ENCODE measurements at regions of chr1 and their contacts with region 1.

Region 1: DNA sequence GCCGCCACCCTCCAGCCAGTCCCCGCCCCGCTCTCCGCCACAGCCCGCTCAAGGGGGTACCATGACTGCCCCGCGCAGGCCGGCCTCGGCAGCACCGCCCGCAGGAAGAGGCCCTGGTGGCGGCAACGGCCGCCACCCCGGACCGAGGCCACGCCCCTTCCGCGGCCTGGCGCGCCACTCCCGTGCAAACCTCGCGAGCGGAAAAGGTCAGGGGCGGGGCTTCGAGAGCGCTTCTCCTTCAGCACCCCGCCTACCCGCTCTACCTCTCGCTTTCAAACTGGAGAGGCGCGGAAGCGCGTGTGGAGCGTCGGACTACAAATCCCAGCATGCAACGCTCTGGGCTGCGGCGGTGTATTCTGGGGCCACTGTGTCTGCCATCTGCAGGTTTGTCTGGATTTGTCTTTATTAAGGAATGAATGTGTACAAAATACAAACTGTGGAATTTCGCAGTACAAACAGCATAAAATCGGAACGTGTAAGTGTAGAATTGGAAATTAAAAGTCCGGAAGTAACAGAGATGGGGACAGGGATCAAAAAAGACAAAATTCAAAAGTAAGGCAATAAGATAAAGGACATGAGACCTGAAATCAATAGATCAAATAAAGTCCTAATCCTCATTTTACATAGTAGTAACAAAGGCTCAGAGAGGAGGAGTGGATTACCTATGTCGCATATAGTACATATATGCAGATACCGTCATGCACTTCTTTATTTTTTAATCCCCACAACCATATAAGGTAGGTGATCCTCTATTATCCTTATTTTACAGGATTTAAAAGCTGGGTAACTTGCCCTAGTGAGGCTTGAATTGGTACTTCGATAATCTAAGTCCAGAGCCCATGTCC is 464 bp upstream of the ADSS2 start:
- DNase-seq: peak; percentile 97
- ATAC-seq: peak; percentile 94
- H3K4me3 Mint-ChIP-seq: peak overlapping the region; percentile 95
- H3K27ac Mint-ChIP-seq: peak overlapping the region; percentile 78
- H3K4me1 Mint-ChIP-seq: peaks cover 32% of the 10 kb centered on the region
- H3K27me3 Mint-ChIP-seq: no peaks in the 10 kb centered on the region
- CTCF ChIP-seq: no peak

Region 2: GRCh38 chr1:243850452-243851256 is 601.5 kb before region 1 on chr1:
- CTCF ChIA-PET with region 1: no interaction called
- POLR2A ChIA-PET with region 1: interaction called, 3 read pairs
- intact Hi-C with region 1: loop called (anchors 5 kb)
- DNase-seq: peak; percentile 76
- ATAC-seq: peak; percentile 47
- H3K4me3 Mint-ChIP-seq: peak overlapping the region; percentile 93
- H3K27ac Mint-ChIP-seq: peak overlapping the region; percentile 90
- H3K4me1 Mint-ChIP-seq: peaks cover 33% of the 10 kb centered on the region
- H3K27me3 Mint-ChIP-seq: peaks cover 2% of the 10 kb centered on the region
- CTCF ChIP-seq: no peak

Region 3: DNA sequence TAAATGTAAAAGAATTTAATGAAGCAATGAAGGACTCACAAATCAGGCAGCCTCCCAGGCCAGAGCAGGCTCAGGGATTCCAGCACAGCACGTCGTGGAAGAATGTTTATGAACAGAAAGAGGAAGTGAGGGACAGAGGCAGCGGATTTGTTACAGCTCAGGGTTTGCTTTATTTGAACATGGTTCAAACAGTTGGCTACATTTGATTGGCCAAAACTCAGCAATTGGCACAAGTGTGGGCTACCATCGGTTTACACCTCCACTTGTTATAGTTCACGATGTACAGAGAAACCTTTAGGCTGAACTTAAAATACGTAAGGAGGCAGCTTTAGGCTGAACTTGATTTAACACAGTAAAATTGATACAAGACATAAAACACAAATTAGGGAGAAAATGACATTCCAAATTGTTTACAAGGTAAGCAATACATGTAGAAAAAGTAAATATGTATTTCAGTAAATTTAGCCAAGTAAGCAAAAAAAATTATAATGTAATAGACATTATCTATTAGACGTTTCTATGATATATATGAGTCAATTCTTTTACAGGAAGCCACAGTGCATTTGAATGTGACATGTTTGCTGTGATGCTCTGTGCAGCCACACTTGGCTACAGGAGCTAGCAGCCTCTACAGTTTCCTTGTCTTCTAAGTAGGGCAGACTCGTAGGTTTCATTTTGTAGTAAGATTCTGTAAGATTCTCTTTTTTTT is 127.0 kb before region 1 on chr1:
- CTCF ChIA-PET with region 1: no interaction called
- POLR2A ChIA-PET with region 1: no interaction called
- intact Hi-C with region 1: loop called (anchors 2 kb)
- DNase-seq: no peak
- ATAC-seq: peak; percentile 89
- H3K4me3 Mint-ChIP-seq: peak overlapping the region; percentile 82
- H3K27ac Mint-ChIP-seq: peak overlapping the region; percentile 78
- H3K4me1 Mint-ChIP-seq: peaks cover 40% of the 10 kb centered on the region
- H3K27me3 Mint-ChIP-seq: no peaks in the 10 kb centered on the region
- CTCF ChIP-seq: no peak

Region 4: GRCh38 chr1:244350027-244350426 is 102.1 kb before region 1 on chr1:
- CTCF ChIA-PET with region 1: no interaction called
- POLR2A ChIA-PET with region 1: no interaction called
- intact Hi-C with region 1: no loop called
- DNase-seq: no peak
- ATAC-seq: peak; percentile 88
- H3K4me3 Mint-ChIP-seq: peak overlapping the region; percentile 65
- H3K27ac Mint-ChIP-seq: no peak overlapping the region
- H3K4me1 Mint-ChIP-seq: peaks cover 22% of the 10 kb centered on the region
- H3K27me3 Mint-ChIP-seq: peaks cover 11% of the 10 kb centered on the region
- CTCF ChIP-seq: no peak

Region 5: DNA sequence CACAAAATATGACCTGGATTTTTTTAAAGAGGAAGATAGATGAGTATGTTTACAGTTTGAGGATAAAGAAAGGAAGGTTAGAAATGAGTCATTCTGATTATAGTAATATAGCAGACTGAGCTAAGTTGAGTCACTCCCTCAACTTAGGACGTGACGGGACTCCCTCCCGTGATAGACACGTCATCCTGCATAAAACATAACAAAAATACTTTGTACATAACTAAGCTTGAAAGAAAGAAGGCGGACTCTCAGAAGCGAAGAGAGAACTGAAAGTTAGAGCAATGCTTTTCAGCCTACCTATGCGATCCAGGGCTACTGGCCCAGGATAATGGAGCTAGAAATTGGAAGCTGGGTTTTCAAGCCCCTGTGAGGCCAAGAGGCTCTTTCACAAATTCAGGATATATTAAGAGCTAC is 147.8 kb after region 1 on chr1:
- CTCF ChIA-PET with region 1: no interaction called
- POLR2A ChIA-PET with region 1: no interaction called
- intact Hi-C with region 1: loop called (anchors 5 kb)
- DNase-seq: no peak
- ATAC-seq: peak; percentile 91
- H3K4me3 Mint-ChIP-seq: no peak overlapping the region
- H3K27ac Mint-ChIP-seq: no peak overlapping the region
- H3K4me1 Mint-ChIP-seq: peaks cover 11% of the 10 kb centered on the region
- H3K27me3 Mint-ChIP-seq: no peaks in the 10 kb centered on the region
- CTCF ChIP-seq: no peak

Region 6: DNA sequence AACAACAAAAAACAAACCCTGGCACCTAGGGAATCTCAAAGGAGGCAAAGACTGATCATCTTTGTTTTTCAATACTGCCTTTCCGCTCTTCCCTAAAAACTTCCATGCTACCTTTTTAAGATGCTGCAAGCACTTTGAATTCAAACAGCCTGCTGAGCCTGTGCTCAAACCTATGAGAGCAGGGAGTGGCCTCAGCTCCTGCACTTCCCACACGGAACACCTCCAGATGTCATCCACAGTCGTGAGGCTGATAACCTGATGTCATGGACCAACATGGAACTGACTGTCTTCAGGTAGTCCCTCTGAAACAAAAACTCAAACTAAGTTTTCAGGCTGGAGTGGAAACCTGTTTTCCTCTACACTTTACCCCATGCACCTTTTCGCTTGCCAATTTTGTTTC is 247.6 kb after region 1 on chr1:
- CTCF ChIA-PET with region 1: no interaction called
- POLR2A ChIA-PET with region 1: no interaction called
- intact Hi-C with region 1: no loop called
- DNase-seq: no peak
- ATAC-seq: no peak
- H3K4me3 Mint-ChIP-seq: no peak overlapping the region
- H3K27ac Mint-ChIP-seq: no peak overlapping the region
- H3K4me1 Mint-ChIP-seq: no peaks in the 10 kb centered on the region
- H3K27me3 Mint-ChIP-seq: no peaks in the 10 kb centered on the region
- CTCF ChIP-seq: no peak

Region 7: DNA sequence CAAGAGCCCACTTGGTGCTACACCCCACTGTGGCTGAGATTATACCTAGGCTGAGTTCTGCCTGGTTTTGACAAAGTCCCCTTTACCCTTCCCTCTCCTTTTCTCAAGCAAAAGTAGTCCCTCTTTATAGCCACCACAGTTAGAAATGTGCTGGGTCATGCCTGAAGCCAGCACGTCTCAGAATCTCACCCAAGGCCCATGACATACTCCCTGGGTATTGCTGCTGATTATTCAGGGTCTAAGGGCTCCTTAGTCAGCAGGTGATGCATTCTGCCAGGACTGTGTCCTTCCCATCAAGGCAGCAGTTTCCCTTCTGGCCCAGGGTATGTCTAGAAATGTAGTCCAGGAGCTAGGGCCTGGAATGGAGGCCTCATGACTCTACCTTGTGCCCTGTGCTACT is 316.0 kb after region 1 on chr1:
- CTCF ChIA-PET with region 1: no interaction called
- POLR2A ChIA-PET with region 1: no interaction called
- intact Hi-C with region 1: no loop called
- DNase-seq: no peak
- ATAC-seq: no peak
- H3K4me3 Mint-ChIP-seq: no peak overlapping the region
- H3K27ac Mint-ChIP-seq: no peak overlapping the region
- H3K4me1 Mint-ChIP-seq: no peaks in the 10 kb centered on the region
- H3K27me3 Mint-ChIP-seq: peaks cover 13% of the 10 kb centered on the region
- CTCF ChIP-seq: no peak

Region 8: DNA sequence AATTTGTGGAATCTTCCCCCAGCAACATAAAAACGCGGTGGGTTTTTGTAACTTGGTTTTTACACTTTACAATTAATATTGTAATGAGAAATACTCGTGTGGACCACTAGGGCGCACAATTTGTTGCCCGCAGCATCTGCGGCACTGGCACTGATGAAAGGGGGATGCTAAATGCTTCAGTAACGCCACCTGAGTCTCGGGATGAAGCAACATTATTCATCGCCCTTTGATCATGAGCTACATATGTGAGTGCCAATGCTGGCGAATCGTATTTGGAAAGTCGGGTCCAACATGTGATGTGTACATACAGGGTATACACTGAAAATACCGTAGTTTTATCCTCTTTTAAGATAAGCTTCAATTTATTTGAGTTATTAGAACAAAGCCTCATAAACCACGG is 349.1 kb after region 1 on chr1:
- CTCF ChIA-PET with region 1: no interaction called
- POLR2A ChIA-PET with region 1: no interaction called
- intact Hi-C with region 1: loop called (anchors 2 kb)
- DNase-seq: peak; percentile 36
- ATAC-seq: peak; percentile 96
- H3K4me3 Mint-ChIP-seq: peak overlapping the region; percentile 55
- H3K27ac Mint-ChIP-seq: peak overlapping the region; percentile 59
- H3K4me1 Mint-ChIP-seq: peaks cover 5% of the 10 kb centered on the region
- H3K27me3 Mint-ChIP-seq: peaks cover 8% of the 10 kb centered on the region
- CTCF ChIP-seq: no peak